ENCODE measurements at regions of chr2 and their contacts with region 1.

Region 1: DNA sequence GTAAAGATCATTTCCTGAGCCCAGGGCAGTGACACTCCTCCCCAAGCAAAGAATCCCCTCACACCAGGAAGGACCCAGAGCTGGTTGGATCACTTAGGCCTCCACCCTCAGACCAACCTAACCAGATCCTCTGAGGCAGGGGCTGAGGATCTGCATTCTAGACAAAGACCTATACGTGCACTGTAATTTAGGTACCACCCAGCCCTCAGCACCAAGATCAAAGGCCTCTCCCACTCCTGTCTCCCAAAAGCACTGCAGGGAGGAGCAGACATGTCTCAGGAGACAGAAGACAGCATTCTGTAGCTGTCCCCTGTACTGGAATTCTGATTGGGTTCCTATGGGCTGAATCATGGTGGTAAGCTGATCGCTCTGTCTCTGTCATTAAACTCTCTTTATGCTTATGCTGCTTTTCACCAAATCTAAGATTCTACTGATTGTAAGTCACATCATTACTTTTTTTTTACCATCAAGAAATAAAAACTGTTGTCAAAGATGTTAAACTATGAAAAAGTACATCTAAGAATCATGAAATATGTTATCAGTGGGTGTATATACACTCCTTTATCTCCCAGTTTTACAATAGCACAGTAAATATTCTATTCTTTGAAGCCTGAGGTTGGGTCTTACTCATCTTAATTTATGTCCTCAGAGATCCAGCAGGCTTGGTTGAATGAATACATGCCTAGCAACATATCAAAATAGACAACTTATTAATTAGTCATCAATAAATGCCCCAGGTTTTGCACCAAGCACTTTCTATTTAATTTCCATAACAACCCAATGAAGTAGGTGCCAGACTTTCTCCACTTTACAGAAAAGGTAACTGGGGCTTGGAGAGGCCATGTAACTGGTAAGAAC is 28.3 kb downstream of the MCFD2 start:
- DNase-seq: peak; percentile 26 to 51
- H3K4me3 ChIP-seq: no peak overlapping the region
- H3K4me3 Mint-ChIP-seq: no peak overlapping the region
- H3K27ac Mint-ChIP-seq: peak overlapping the region; percentile 59
- H3K4me1 ChIP-seq: peaks cover 20% of the 10 kb centered on the region
- H3K4me1 Mint-ChIP-seq: peaks cover 19% of the 10 kb centered on the region
- H3K27me3 ChIP-seq: no peaks in the 10 kb centered on the region
- H3K27me3 Mint-ChIP-seq: no peaks in the 10 kb centered on the region
- CTCF ChIP-seq: no peak

Region 2: GRCh38 chr2:46632349-46632748 is 254.9 kb before region 1 on chr2:
- CTCF ChIA-PET with region 1: no interaction called
- POLR2A ChIA-PET with region 1: no interaction called
- intact Hi-C with region 1: loop called (anchors 1 kb)
- DNase-seq: peak in 1 of 2 experiments; percentile 39
- H3K4me3 ChIP-seq: no peak overlapping the region
- H3K4me3 Mint-ChIP-seq: no peak overlapping the region
- H3K27ac Mint-ChIP-seq: no peak overlapping the region
- H3K4me1 ChIP-seq: no peaks in the 10 kb centered on the region
- H3K4me1 Mint-ChIP-seq: no peaks in the 10 kb centered on the region
- H3K27me3 ChIP-seq: no peaks in the 10 kb centered on the region
- H3K27me3 Mint-ChIP-seq: no peaks in the 10 kb centered on the region
- CTCF ChIP-seq: peak; percentile 35 to 41

Region 3: GRCh38 chr2:46769809-46770208 is 117.4 kb before region 1 on chr2:
- CTCF ChIA-PET with region 1: no interaction called
- POLR2A ChIA-PET with region 1: no interaction called
- intact Hi-C with region 1: loop called (anchors 2 kb)
- DNase-seq: no peak
- H3K4me3 ChIP-seq: no peak overlapping the region
- H3K4me3 Mint-ChIP-seq: peak overlapping the region; percentile 75
- H3K27ac Mint-ChIP-seq: peak overlapping the region; percentile 53
- H3K4me1 ChIP-seq: peaks cover 4% of the 10 kb centered on the region; the same call in 1 of the 2 replicates
- H3K4me1 Mint-ChIP-seq: peaks cover 15% of the 10 kb centered on the region
- H3K27me3 ChIP-seq: no peaks in the 10 kb centered on the region
- H3K27me3 Mint-ChIP-seq: no peaks in the 10 kb centered on the region
- CTCF ChIP-seq: peak in 1 of 2 experiments; percentile 37

Region 4: GRCh38 chr2:46803911-46804670 is 83.2 kb before region 1 on chr2:
- CTCF ChIA-PET with region 1: no interaction called
- POLR2A ChIA-PET with region 1: no interaction called
- intact Hi-C with region 1: loop called (anchors 5 kb)
- DNase-seq: no peak
- H3K4me3 ChIP-seq: no peak overlapping the region
- H3K4me3 Mint-ChIP-seq: no peak overlapping the region
- H3K27ac Mint-ChIP-seq: no peak overlapping the region
- H3K4me1 ChIP-seq: no peaks in the 10 kb centered on the region
- H3K4me1 Mint-ChIP-seq: no peaks in the 10 kb centered on the region
- H3K27me3 ChIP-seq: no peaks in the 10 kb centered on the region
- H3K27me3 Mint-ChIP-seq: peaks cover 11% of the 10 kb centered on the region
- CTCF ChIP-seq: no peak

Region 5: DNA sequence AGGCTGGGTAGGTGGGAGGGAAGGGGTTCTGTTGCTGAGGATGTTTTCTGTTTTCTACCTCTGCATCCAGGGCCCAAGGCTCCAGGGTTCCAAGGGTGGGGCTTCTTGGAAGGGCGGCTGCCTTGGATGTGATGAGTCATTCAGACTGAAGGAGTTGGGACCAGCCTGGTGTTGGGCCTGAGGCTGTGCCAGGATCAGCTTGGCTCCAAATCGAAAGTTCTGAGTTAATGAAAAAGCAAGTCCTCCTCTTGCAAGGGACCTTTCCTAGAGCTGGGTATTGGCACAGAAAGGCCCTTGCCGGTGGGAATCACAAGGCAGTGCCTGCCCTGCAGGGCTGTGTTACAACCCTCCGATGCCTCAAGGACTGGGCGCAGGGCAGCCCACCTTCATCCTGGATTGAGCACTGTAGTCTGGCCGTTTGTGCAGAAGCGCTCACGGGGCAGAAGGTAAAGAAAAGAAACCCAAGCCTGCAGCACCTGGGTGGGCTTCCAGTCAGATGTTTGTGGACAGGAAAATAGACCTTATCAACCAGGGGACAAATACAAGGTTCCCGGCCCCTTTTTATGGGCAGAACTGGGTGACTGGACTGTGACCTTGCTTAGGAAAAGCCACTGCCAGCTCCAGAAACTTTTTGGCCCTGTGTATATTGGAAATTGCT is 80.9 kb after region 1 on chr2:
- CTCF ChIA-PET with region 1: no interaction called
- POLR2A ChIA-PET with region 1: no interaction called
- intact Hi-C with region 1: no loop called
- DNase-seq: peak in 1 of 2 experiments; percentile 36
- H3K4me3 ChIP-seq: no peak overlapping the region
- H3K4me3 Mint-ChIP-seq: no peak overlapping the region
- H3K27ac Mint-ChIP-seq: peak overlapping the region; percentile 80
- H3K4me1 ChIP-seq: peaks cover 45% of the 10 kb centered on the region
- H3K4me1 Mint-ChIP-seq: peaks cover 32% of the 10 kb centered on the region
- H3K27me3 ChIP-seq: no peaks in the 10 kb centered on the region
- H3K27me3 Mint-ChIP-seq: no peaks in the 10 kb centered on the region
- CTCF ChIP-seq: no peak

Region 6: GRCh38 chr2:47250630-47251403 is 363.6 kb after region 1 on chr2:
- CTCF ChIA-PET with region 1: no interaction called
- POLR2A ChIA-PET with region 1: no interaction called
- intact Hi-C with region 1: no loop called
- DNase-seq: no peak
- H3K4me3 ChIP-seq: no peak overlapping the region
- H3K4me3 Mint-ChIP-seq: no peak overlapping the region
- H3K27ac Mint-ChIP-seq: no peak overlapping the region
- H3K4me1 ChIP-seq: peaks cover 10% of the 10 kb centered on the region; the same call in 1 of the 2 replicates
- H3K4me1 Mint-ChIP-seq: peaks cover 2% of the 10 kb centered on the region
- H3K27me3 ChIP-seq: no peaks in the 10 kb centered on the region
- H3K27me3 Mint-ChIP-seq: no peaks in the 10 kb centered on the region
- CTCF ChIP-seq: no peak

Measured in Caco-2 (cell line).